ENCODE measurements at regions of chr4 and their contacts with region 1.

Region 1: DNA sequence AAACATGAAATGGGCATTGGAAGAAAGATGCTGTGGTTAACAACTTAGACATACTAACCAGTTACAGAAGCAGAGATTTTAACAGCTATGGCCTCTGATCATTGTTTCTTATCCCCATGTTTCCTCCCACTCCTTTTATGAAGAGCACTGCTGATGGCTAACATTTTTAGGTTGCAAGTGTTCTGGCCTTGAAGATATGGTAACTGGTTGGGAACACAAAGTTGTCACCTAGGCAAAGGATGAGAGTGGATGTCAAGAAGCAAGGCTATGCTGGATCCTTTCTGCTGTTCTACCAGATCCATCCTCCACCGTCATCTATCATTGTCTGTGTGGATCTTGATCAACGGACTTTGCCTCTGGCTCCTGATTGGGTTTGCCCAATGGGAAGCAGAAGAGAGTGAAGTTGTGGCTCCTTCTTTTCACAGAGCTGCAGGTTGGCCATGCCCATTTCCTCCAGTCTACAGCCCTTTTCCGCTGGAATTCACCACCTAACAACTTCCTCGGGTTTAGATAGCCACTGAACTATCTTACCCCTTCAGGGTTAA is 48.9 kb upstream of the SPP1 start:
- DNase-seq: no peak
- H3K4me3 Mint-ChIP-seq: no peak overlapping the region
- H3K27ac Mint-ChIP-seq: no peak overlapping the region
- H3K4me1 Mint-ChIP-seq: no peaks in the 10 kb centered on the region
- H3K27me3 Mint-ChIP-seq: peaks cover 12% of the 10 kb centered on the region

Region 2: DNA sequence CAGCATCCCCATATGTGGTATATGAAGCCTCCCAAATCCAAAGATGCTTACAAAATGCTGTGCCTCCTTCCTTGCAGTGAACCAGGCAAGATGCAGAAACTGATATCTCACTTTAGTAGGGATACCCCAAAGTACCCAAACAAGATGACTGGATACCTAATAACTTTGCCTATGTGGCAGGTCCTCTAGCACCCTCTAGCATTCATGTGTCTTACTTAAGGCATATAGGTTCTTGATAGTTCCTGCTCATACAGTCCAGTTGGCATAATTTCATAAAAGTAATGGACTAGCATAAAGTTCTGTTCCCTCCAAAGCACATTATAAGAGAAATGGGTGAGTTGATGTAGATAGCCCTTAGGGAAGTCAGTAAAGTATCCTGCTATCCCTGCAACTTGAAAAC is 12.1 kb after region 1 on chr4:
- CTCF ChIA-PET with region 1: no interaction called
- intact Hi-C with region 1: loop called (anchors 1 kb)
- DNase-seq: no peak
- H3K4me3 Mint-ChIP-seq: no peak overlapping the region
- H3K27ac Mint-ChIP-seq: no peak overlapping the region
- H3K4me1 Mint-ChIP-seq: no peaks in the 10 kb centered on the region
- H3K27me3 Mint-ChIP-seq: peaks cover 5% of the 10 kb centered on the region

Region 3: DNA sequence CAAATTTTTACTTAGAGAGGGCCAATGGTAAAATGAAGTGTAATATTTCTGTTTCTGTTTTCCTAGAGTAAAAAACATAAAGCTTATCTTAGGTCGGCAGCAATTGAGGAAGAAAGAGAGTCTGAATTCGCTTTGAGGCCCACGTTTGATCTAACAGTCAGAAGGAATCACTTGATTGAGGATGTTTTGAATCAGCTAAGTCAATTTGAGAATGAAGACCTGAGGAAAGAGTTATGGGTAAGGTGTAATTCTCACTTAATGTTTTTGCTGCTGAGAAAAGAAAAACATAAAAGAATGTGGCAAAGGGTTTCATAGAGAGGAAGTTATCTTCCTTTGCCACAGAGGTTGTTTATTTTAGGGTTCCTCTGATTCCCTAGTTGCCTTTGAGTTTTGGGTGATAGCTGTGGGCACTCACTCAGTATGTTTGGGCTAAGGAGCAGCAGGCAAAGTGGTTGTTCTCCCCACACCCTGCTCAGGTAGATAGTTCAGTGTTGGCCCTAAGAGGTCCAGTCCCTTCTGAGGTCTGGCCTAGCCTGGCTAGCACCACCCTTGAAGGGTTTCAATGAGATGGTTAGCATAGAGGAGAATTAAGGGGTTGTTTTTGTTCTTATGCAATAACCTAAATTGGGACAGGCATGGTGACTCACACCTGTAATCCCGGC is 562.6 kb after region 1 on chr4:
- CTCF ChIA-PET with region 1: no interaction called
- intact Hi-C with region 1: no loop called
- DNase-seq: no peak
- H3K4me3 Mint-ChIP-seq: no peak overlapping the region
- H3K27ac Mint-ChIP-seq: peak overlapping the region; percentile 54
- H3K4me1 Mint-ChIP-seq: peaks cover 12% of the 10 kb centered on the region
- H3K27me3 Mint-ChIP-seq: no peaks in the 10 kb centered on the region

Measured in activated naive CD4-positive, alpha-beta T cell treated with anti-CD3 and anti-CD28 coated beads for 36 hours (primary cell).